ENCODE measurements at regions of chr16 and their contacts with region 1.

Region 1: DNA sequence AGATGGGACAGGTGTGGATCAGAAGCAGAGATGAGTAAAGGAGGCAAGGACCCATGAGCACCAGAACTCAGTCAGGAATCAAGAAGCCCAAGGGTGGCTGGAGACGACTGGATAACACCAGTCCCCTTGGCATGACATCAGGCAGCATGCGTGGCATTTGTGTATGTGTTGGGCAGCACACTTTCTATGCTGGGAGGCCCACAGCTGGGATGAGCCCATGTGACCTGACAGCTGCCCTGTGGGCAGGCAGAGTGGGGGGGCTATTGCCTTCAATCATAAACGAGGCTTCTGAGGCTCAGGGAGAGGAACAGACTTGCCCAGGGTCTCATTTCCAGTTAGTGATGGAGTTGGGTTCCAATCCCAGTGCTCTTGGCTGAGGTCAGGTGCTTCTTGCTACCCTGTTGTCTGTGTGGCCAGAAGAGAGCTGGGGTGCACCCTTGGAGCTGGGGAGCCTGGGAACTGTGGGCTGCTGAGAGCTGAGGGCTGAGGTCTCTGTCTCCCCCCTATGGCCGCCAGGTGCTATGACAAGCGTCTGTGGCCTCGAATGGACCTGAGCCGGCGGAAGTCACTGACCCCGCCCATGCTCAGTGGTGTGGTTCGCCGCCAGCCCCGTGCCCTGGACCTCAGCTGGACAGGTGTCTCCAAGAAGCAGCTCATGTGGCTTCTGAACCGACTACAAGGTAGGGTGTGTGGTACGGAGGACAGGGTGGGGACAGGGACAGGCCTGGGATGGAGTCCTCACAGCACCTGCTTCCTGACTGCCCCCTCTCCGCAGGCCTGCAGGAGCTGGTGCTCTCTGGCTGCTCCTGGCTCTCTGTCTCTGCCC is 7.1 kb upstream of the ORAI3 start:
- DNase-seq: peak; percentile 85
- ATAC-seq: peak; percentile 97
- H3K4me3 Mint-ChIP-seq: peak overlapping the region; percentile 66
- H3K27ac Mint-ChIP-seq: peak overlapping the region; percentile 77
- H3K4me1 Mint-ChIP-seq: peaks cover 40% of the 10 kb centered on the region
- H3K27me3 Mint-ChIP-seq: no peaks in the 10 kb centered on the region

Region 2: GRCh38 chr16:30922960-30923535 is 18.8 kb before region 1 on chr16:
- CTCF ChIA-PET with region 1: interaction called, 18 read pairs
- POLR2A ChIA-PET with region 1: no interaction called
- DNase-seq: peak; percentile 98
- ATAC-seq: peak; percentile 82
- H3K4me3 Mint-ChIP-seq: peak overlapping the region; percentile 97
- H3K27ac Mint-ChIP-seq: peak overlapping the region; percentile 99
- H3K4me1 Mint-ChIP-seq: peaks cover 28% of the 10 kb centered on the region
- H3K27me3 Mint-ChIP-seq: no peaks in the 10 kb centered on the region

Measured in activated CD8-positive, alpha-beta T cell treated with anti-CD3 and anti-CD28 coated beads, Interleukin-2, amount 10 ng/mL, durations not matched to agents 7 days and 5 days (primary cell).